T-cell (primary cell): ENCODE measurements at regions of chr10 and their contacts with region 1.

Region 1: DNA sequence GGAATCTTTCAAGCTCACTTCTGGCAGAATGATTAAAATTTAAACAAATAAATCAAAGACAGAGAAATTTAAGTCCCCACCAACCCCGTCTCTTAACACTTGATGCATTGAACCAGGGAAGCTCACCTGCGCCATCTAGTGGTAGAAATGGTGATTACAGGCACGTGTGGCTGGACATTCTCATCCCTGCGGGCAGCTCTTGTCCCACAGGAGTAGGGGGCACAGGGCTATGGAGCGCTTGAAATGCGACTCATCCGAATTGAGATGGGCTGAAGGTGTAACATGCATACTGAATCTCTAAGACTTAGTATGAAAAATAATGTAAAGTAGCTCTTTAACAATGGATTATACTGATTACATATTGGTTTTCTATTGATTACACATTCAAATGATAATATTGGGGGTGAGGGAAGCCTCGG is 24.8 kb upstream of the SLIT1 start:
- DNase-seq: peak in 34 of 35 experiments; percentile 4 to 83 (median 52)
- ATAC-seq: peak in 3 of 4 experiments; percentile 34 to 54 (median 44)
- H3K4me3 ChIP-seq: no peak overlapping the region
- H3K4me3 Mint-ChIP-seq: no peak overlapping the region
- H3K27ac ChIP-seq: no peak overlapping the region
- H3K27ac Mint-ChIP-seq: no peak overlapping the region
- H3K4me1 ChIP-seq: no peaks in the 10 kb centered on the region
- H3K4me1 Mint-ChIP-seq: no peaks in the 10 kb centered on the region
- H3K27me3 ChIP-seq: peaks cover 0 to 5% of the 10 kb centered on the region in 2 experiments
- H3K27me3 Mint-ChIP-seq: no peaks in the 10 kb centered on the region

Region 2: DNA sequence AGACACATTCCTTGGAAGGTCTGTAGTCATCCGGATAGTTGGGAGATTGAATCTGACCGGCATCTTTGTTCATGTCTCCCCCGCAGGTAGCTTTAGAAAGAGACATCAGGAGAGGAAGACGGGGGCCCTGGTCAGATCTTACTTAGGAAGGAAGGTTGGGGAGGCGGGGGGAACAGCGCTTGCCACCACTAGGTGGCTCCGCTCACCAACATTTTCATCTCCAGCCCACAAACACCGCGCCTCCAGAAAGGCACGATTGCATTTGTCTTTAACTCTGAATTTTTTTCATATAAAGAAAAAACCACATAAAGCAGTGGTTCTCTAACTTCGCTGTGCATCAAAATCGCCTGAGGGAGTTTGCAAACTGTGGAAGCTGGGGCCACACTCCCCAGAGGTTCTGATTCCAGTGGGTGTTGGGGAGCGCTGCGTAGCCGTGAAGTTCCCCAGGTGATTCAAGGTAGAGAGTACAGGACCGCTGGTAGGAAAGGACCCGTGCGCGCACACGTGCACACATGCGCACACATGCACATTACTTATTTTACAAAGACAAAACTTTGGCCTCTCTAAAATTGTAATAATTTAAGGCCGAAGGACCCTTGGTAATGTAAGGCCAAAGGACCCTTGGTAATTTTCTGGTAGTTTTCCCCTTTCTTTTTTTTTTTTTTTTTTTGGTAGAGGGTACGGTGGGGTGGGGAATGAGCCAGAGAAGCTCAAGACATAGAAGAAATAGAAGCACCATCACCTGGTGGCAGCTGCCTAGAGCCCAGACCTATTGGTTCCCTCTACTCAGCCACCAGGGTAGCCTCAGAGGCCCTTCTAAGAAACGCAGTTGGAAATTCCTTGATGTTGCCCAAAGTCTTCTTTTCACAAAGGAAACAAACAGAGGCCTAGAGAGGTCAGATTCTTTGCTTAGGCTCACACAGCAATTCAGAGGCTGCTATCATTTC is 814.3 kb before region 1 on chr10:
- CTCF ChIA-PET with region 1: interaction called in 1 of 2 experiments, 12 read pairs
- POLR2A ChIA-PET with region 1: no interaction called
- DNase-seq: peak; percentile 18 to 77 (median 47)
- ATAC-seq: peak; percentile 75 to 86 (median 84)
- H3K4me3 ChIP-seq: no peak overlapping the region
- H3K4me3 Mint-ChIP-seq: peak overlapping the region; percentile 14 to 42 (median 15)
- H3K27ac ChIP-seq: no peak overlapping the region
- H3K27ac Mint-ChIP-seq: no peak overlapping the region
- H3K4me1 ChIP-seq: peaks cover 0 to 8% of the 10 kb centered on the region in 2 experiments
- H3K4me1 Mint-ChIP-seq: peaks cover 0 to 8% (median 6%) of the 10 kb centered on the region in 3 donors
- H3K27me3 ChIP-seq: peaks cover 0 to 30% of the 10 kb centered on the region in 2 experiments
- H3K27me3 Mint-ChIP-seq: peaks cover 15 to 27% of the 10 kb centered on the region in 2 donors

Region 3: GRCh38 chr10:97037365-97038361 is 172.9 kb before region 1 on chr10:
- CTCF ChIA-PET with region 1: interaction called, 9 to 14 read pairs
- POLR2A ChIA-PET with region 1: no interaction called
- DNase-seq: peak in 34 of 35 experiments; percentile 12 to 75 (median 51)
- ATAC-seq: peak; percentile 84 to 91 (median 88)
- H3K4me3 ChIP-seq: peak overlapping the region; percentile 39 to 67
- H3K4me3 Mint-ChIP-seq: peak overlapping the region; percentile 64 to 75 (median 70)
- H3K27ac ChIP-seq: no peak overlapping the region
- H3K27ac Mint-ChIP-seq: no peak overlapping the region
- H3K4me1 ChIP-seq: peaks cover 0 to 9% of the 10 kb centered on the region in 2 experiments
- H3K4me1 Mint-ChIP-seq: peaks cover 11 to 22% (median 14%) of the 10 kb centered on the region in 3 donors
- H3K27me3 ChIP-seq: peaks cover 0 to 20% of the 10 kb centered on the region in 2 experiments
- H3K27me3 Mint-ChIP-seq: peaks cover 15 to 17% of the 10 kb centered on the region in 2 donors

Region 4: GRCh38 chr10:97072851-97073665 is 137.5 kb before region 1 on chr10:
- CTCF ChIA-PET with region 1: interaction called, 59 to 104 read pairs
- POLR2A ChIA-PET with region 1: no interaction called
- DNase-seq: peak; percentile 37 to 83 (median 72)
- ATAC-seq: peak; percentile 59 to 71 (median 67)
- H3K4me3 ChIP-seq: no peak overlapping the region
- H3K4me3 Mint-ChIP-seq: no peak overlapping the region
- H3K27ac ChIP-seq: no peak overlapping the region
- H3K27ac Mint-ChIP-seq: no peak overlapping the region
- H3K4me1 ChIP-seq: peaks cover 0 to 5% of the 10 kb centered on the region in 2 experiments
- H3K4me1 Mint-ChIP-seq: peaks cover 9 to 11% (median 10%) of the 10 kb centered on the region in 3 donors
- H3K27me3 ChIP-seq: peaks cover 0 to 44% of the 10 kb centered on the region in 2 experiments
- H3K27me3 Mint-ChIP-seq: peaks cover 34 to 38% of the 10 kb centered on the region in 2 donors

Region 5: DNA sequence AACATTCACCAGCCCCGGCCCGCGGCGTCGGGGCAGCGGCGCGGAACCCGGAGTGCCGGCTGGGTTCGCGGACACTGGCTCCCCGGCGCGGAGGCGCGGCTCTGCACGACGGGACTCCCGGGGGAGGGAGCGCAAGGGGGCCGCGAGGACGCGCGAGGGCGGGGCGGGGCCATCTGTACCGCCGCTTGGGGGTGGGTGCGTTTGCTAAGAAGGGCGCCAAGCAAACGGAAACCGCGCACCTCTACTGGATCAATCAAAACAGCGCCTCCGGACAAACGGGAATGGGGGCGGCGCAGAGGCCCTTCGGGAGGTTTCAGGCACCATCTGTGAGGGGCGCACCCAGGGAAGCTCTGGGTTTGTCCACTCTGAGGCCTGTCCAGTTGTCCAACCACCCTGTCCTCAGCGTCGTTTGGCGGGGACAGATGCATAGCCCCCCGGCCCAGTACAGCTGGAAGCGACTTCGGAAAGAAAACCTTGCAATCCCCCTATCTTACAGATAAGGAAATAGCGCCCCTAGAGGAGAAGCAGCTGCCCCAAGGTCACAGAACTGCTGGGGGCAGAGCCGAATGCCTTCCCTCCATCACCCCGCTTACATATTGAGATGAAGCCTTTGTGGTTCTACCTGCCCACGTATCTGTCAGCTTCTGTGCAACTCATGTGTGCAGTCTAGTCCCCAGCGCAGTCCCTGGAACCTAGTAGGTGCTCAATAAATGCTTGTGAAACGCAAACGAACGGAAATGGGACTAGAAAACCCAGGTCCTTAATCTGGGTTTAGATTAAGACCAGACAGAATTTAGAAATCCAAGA is 14.1 kb before region 1 on chr10:
- CTCF ChIA-PET with region 1: interaction called, 25 to 45 read pairs
- POLR2A ChIA-PET with region 1: no interaction called
- DNase-seq: peak; percentile 35 to 79 (median 52)
- ATAC-seq: peak; percentile 85 to 90 (median 88)
- H3K4me3 ChIP-seq: peak overlapping the region; percentile 65 to 84
- H3K4me3 Mint-ChIP-seq: peak overlapping the region; percentile 74 to 82 (median 78)
- H3K27ac ChIP-seq: peak overlapping the region; percentile 1
- H3K27ac Mint-ChIP-seq: no peak overlapping the region
- H3K4me1 ChIP-seq: peaks cover 0 to 14% of the 10 kb centered on the region in 2 experiments
- H3K4me1 Mint-ChIP-seq: peaks cover 7 to 11% (median 11%) of the 10 kb centered on the region in 3 donors
- H3K27me3 ChIP-seq: peaks cover 6 to 27% of the 10 kb centered on the region in 2 experiments
- H3K27me3 Mint-ChIP-seq: peaks cover 14 to 35% of the 10 kb centered on the region in 2 donors